Right ventricle myocardium inferior (tissue), 1 donor: ENCODE measurements at regions of chr15 and their contacts with region 1.

Region 1: GRCh38 chr15:39358441-39359041 is 222.3 kb upstream of the THBS1 start:
- DNase-seq: no peak
- ATAC-seq: peak; percentile 92

Region 2: DNA sequence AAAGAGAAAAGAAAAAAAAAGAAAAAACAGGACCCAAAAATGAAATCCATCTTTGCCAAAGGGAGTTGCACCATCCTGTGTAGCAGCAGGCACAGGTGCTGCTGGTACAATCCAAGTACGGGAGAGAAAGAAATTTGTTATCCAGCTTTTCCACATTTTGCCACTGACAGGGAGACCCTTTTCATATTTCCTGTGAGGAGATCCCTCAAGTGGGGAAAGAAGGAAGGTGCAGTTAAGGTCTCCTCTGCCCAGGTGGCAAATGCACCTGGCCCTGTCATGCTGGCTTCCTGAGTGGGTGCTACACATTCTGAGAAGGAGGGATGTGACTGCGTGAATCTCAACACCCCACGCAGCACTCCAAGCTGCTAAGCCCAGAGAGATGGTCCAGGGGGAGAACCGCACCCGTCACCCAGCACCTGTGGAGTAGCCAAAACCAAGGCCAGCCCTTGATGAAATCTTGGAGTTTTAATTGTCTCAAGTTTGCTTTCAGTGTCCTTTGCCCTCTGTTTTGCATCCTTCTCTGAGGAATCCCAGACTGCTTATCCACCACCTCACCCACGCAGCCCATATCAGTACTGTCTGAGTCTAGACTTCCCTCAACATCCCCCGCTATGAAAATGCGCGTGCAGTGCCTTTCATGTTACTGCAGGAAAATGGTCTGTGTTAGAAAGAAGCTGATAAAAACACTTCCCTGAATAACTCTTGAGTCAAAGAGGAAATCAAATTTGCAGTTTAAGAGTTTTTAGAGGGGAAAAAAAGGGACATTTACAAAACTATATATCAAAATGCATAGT is 80.5 kb after region 1 on chr15:
- intact Hi-C with region 1: loop called (anchors 5 kb)
- DNase-seq: no peak
- ATAC-seq: no peak